ENCODE measurements at regions of chr6 and their contacts with region 1.

Region 1: DNA sequence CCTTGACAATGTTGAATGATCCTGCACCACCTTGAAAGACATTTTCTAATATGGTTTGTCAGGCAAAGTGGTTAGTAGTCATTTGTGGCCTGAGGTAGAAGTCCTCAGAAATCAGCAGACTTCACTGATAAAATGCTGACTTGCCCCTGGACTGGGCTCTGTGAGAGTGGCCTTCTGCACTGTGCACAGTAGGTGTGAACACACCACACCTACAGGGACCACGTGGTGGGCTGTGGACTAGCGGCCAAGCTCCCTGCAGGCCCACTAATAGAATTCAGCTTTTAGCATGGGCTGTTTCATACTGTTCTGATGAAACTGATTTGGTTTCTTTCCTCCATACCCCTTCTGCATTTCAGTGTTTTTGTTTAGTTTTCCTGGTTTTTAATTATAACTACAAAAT is 7.3 kb downstream of the BPHL start:
- DNase-seq: no peak
- H3K4me3 Mint-ChIP-seq: no peak overlapping the region
- H3K27ac Mint-ChIP-seq: no peak overlapping the region
- H3K4me1 Mint-ChIP-seq: peaks cover 3% of the 10 kb centered on the region
- H3K27me3 Mint-ChIP-seq: no peaks in the 10 kb centered on the region

Region 2: GRCh38 chr6:3251462-3252314 is 125.9 kb after region 1 on chr6:
- intact Hi-C with region 1: loop called (anchors 1 kb)
- DNase-seq: peak; percentile 76
- H3K4me3 Mint-ChIP-seq: no peak overlapping the region
- H3K27ac Mint-ChIP-seq: no peak overlapping the region
- H3K4me1 Mint-ChIP-seq: peaks cover 10% of the 10 kb centered on the region
- H3K27me3 Mint-ChIP-seq: peaks cover 49% of the 10 kb centered on the region

Region 3: GRCh38 chr6:3258720-3259490 is 133.1 kb after region 1 on chr6 and contains the start of gene PSMG4:
- intact Hi-C with region 1: loop called (anchors 2 kb)
- DNase-seq: peak; percentile 90
- H3K4me3 Mint-ChIP-seq: peak within 1 kb of the TSS; percentile 98
- H3K27ac Mint-ChIP-seq: peak within 1 kb of the TSS; percentile 88
- H3K4me1 Mint-ChIP-seq: peaks cover 25% of the 10 kb centered on the region
- H3K27me3 Mint-ChIP-seq: peaks cover 17% of the 10 kb centered on the region
- total RNA-seq, gene PSMG4: 26.4 and 30.9 TPM in 2 replicates

Region 4: DNA sequence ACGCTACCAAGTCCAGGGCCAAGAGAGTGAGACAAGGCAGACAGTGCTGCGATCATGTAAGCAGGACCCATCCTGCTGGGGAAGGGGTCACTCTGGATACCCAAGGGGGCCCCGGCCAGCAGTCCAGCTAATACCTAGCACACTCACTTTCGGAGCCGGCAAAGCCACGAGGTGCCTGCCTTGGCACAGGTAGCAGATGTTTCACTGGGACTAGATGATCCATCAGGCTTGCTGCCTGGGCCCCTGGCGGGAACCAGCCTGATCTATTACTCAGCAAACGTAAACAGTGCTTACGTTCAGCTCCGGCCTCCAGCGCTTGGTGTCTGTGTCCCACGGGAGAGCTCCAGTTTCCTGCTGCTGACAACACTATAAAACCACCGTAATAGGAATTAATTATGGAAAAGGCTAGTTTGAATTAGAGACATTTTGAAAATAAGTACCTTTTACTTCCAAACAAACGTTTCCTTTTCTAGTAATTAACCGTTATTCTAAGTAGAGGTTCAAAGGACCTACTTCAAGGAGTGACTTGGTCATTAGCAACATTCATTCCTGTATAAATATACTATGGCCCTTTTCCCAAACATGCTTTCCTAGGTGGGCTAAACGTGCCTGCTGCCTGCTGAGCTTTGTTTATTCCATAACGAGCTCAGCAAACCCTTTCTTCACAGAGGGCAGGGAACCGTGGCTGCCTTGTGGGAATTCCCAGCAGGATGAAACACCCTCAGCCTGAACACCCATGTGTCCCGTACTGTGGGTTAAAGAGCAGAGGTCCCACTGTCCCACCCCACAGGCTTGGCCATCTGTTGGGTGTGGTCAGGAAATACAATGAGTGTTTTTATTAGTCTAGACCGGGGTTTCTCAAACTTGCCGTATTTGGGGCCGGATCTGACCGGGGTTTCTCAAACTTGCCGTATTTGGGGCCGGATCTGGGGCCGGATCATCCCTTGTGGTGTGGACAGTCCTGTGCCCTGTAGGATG is 312.7 kb after region 1 on chr6:
- intact Hi-C with region 1: no loop called
- DNase-seq: no peak
- H3K4me3 Mint-ChIP-seq: no peak overlapping the region
- H3K27ac Mint-ChIP-seq: no peak overlapping the region
- H3K4me1 Mint-ChIP-seq: no peaks in the 10 kb centered on the region
- H3K27me3 Mint-ChIP-seq: peaks cover 2% of the 10 kb centered on the region